ENCODE measurements at regions of chr1 and their contacts with region 1.

Region 1: DNA sequence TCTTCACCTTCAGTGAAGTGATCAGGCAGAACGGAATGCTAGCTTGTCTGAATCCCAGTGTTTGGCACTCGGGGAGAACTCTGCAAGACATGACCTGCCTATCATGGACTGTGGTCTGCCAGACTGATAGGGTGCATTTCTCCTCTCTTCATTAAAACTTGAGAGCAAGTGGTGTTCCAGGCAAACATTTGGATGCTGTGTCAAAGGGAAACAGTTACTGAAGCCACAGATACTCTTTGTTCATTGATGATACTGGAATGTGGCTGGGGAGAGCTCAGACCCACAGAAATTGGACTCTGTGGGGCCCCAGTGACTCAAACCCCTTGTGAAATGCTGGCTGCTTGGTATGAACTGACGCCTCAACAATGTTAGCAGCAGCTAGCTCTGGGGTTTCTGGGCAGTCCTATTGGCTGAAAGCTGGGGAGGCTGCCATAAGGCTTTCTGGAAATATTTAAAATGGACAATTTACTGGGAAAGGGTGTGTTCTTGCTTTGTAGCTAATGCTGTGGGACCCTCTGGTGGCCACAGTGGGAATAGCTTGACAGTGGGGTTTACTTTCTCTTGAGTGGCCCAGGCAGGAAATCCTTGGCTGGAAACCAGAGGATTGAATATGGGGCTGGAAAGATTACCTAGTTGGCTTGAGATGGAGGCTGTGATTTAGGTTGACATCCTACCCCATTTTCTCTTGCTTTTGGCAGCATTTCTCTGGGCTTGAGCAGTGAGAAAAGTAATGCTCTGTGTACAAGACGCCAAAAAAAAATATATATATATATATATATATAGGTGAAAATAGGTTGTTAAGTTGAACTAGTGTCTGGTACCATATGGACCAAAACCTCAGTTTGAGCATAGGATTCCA is 8.0 kb upstream of the S100A10 start:
- DNase-seq: peak; percentile 62 to 86 (median 75)
- ATAC-seq: peak; percentile 87
- H3K4me3 ChIP-seq: no peak overlapping the region
- H3K4me3 Mint-ChIP-seq: no peak overlapping the region
- H3K27ac ChIP-seq: no peak overlapping the region
- H3K27ac Mint-ChIP-seq: no peak overlapping the region
- H3K4me1 ChIP-seq: peaks cover 9% of the 10 kb centered on the region
- H3K4me1 Mint-ChIP-seq: no peaks in the 10 kb centered on the region
- H3K27me3 ChIP-seq: no peaks in the 10 kb centered on the region
- H3K27me3 Mint-ChIP-seq: peaks cover 11% of the 10 kb centered on the region
- CTCF ChIP-seq: peak; percentile 95

Region 2: DNA sequence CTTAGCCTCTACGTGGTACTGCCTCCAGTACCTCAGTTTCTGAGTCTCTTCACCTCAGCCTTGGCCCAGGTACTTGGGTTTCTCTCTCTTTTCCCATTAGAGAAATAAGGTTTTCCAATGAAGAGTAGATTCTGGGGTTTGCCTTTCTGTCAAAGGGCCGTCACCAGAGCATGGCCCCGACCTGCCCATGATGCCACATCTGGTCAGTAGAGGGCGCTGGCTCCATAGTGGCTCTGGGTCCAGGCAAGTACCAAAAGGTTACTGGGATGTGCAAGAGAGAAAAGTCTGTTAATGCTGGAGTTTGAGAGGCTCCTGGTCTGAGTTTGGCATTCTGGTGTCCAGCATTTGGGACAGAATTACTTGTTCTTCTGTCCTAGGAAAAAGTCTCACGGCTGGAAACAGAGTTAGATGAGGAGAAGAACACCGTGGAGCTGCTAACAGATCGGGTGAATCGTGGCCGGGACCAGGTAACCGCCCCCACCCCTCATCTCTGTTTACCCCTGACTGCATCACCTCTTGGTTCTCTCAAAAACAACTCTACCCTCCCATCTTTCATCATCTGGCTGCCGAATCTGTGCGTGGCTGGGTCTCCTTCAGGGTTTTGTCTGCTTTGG is 466.8 kb before region 1 on chr1:
- CTCF ChIA-PET with region 1: no interaction called
- POLR2A ChIA-PET with region 1: no interaction called
- intact Hi-C with region 1: loop called in 1 of 2 experiments (anchors 5 kb)
- DNase-seq: peak; percentile 60 to 84 (median 72)
- ATAC-seq: peak; percentile 84
- H3K4me3 ChIP-seq: no peak overlapping the region
- H3K4me3 Mint-ChIP-seq: no peak overlapping the region
- H3K27ac ChIP-seq: no peak overlapping the region
- H3K27ac Mint-ChIP-seq: no peak overlapping the region
- H3K4me1 ChIP-seq: peaks cover 10% of the 10 kb centered on the region
- H3K4me1 Mint-ChIP-seq: peaks cover 5% of the 10 kb centered on the region
- H3K27me3 ChIP-seq: no peaks in the 10 kb centered on the region
- H3K27me3 Mint-ChIP-seq: no peaks in the 10 kb centered on the region
- CTCF ChIP-seq: peak; percentile 82

Region 3: GRCh38 chr1:151693076-151693651 is 308.5 kb before region 1 on chr1:
- CTCF ChIA-PET with region 1: no interaction called
- POLR2A ChIA-PET with region 1: no interaction called
- intact Hi-C with region 1: no loop called
- DNase-seq: no peak
- ATAC-seq: no peak
- H3K4me3 ChIP-seq: no peak overlapping the region
- H3K4me3 Mint-ChIP-seq: no peak overlapping the region
- H3K27ac ChIP-seq: no peak overlapping the region
- H3K27ac Mint-ChIP-seq: no peak overlapping the region
- H3K4me1 ChIP-seq: peaks cover 2% of the 10 kb centered on the region
- H3K4me1 Mint-ChIP-seq: no peaks in the 10 kb centered on the region
- H3K27me3 ChIP-seq: no peaks in the 10 kb centered on the region
- H3K27me3 Mint-ChIP-seq: no peaks in the 10 kb centered on the region
- CTCF ChIP-seq: no peak

Region 4: GRCh38 chr1:151888972-151889570 is 112.5 kb before region 1 on chr1:
- CTCF ChIA-PET with region 1: interaction called, 7 read pairs
- POLR2A ChIA-PET with region 1: interaction called, 5 read pairs
- intact Hi-C with region 1: loop called (anchors 1 kb)
- DNase-seq: peak in 3 of 14 experiments; percentile 52 to 63 (median 62)
- ATAC-seq: peak; percentile 69
- H3K4me3 ChIP-seq: no peak overlapping the region
- H3K4me3 Mint-ChIP-seq: no peak overlapping the region
- H3K27ac ChIP-seq: no peak overlapping the region
- H3K27ac Mint-ChIP-seq: peak overlapping the region; percentile 76
- H3K4me1 ChIP-seq: peaks cover 16% of the 10 kb centered on the region
- H3K4me1 Mint-ChIP-seq: peaks cover 40% of the 10 kb centered on the region
- H3K27me3 ChIP-seq: no peaks in the 10 kb centered on the region
- H3K27me3 Mint-ChIP-seq: no peaks in the 10 kb centered on the region
- CTCF ChIP-seq: peak; percentile 68

Region 5: GRCh38 chr1:151968058-151968457 is 33.6 kb before region 1 on chr1:
- CTCF ChIA-PET with region 1: interaction called, 93 read pairs
- POLR2A ChIA-PET with region 1: interaction called, 18 read pairs
- intact Hi-C with region 1: loop called (anchors 1 kb)
- DNase-seq: peak; percentile 20 to 83 (median 38)
- ATAC-seq: peak; percentile 99
- H3K4me3 ChIP-seq: no peak overlapping the region
- H3K4me3 Mint-ChIP-seq: no peak overlapping the region
- H3K27ac ChIP-seq: no peak overlapping the region
- H3K27ac Mint-ChIP-seq: no peak overlapping the region
- H3K4me1 ChIP-seq: peaks cover 9% of the 10 kb centered on the region
- H3K4me1 Mint-ChIP-seq: peaks cover 7% of the 10 kb centered on the region
- H3K27me3 ChIP-seq: no peaks in the 10 kb centered on the region
- H3K27me3 Mint-ChIP-seq: no peaks in the 10 kb centered on the region
- CTCF ChIP-seq: peak; percentile 72

Region 6: DNA sequence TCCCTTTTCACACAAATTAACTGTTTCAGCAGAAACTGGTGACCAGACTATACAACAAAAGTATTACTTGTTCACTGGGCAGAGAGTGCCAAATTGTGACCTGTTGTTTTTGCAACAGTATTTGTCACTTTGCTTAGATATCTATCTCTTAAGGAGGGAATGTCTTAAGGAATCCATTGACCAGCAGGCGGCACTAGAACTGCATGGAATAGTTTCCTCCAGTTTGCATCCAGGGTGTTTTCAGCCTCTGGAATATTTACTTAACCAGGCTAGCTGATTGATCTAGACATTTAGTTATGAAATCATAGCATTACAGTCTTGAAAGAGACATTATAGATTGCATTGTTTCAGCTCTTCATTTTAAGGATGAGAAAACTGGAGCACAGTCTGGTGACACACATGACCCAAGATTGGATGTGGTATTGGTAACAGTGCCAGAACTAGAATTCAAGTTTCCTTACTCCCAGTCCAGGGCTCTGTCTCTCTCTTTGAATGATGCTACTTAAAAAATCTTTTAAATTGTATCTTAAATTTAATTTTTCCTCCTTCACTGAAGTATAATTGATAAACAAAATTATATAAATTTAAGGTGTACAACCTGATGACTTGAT is 140.5 kb after region 1 on chr1:
- CTCF ChIA-PET with region 1: no interaction called
- POLR2A ChIA-PET with region 1: no interaction called
- intact Hi-C with region 1: no loop called
- DNase-seq: peak in 4 of 14 experiments; percentile 10 to 49 (median 28)
- ATAC-seq: no peak
- H3K4me3 ChIP-seq: no peak overlapping the region
- H3K4me3 Mint-ChIP-seq: no peak overlapping the region
- H3K27ac ChIP-seq: no peak overlapping the region
- H3K27ac Mint-ChIP-seq: no peak overlapping the region
- H3K4me1 ChIP-seq: no peaks in the 10 kb centered on the region
- H3K4me1 Mint-ChIP-seq: no peaks in the 10 kb centered on the region
- H3K27me3 ChIP-seq: peaks cover 8 to 29% of the 10 kb centered on the region in 2 experiments
- H3K27me3 Mint-ChIP-seq: peaks cover 54% of the 10 kb centered on the region
- CTCF ChIP-seq: no peak

Region 7: GRCh38 chr1:152237093-152237492 is 235.5 kb after region 1 on chr1:
- CTCF ChIA-PET with region 1: no interaction called
- POLR2A ChIA-PET with region 1: no interaction called
- intact Hi-C with region 1: no loop called
- DNase-seq: no peak
- ATAC-seq: no peak
- H3K4me3 ChIP-seq: no peak overlapping the region
- H3K4me3 Mint-ChIP-seq: no peak overlapping the region
- H3K27ac ChIP-seq: no peak overlapping the region
- H3K27ac Mint-ChIP-seq: no peak overlapping the region
- H3K4me1 ChIP-seq: no peaks in the 10 kb centered on the region
- H3K4me1 Mint-ChIP-seq: no peaks in the 10 kb centered on the region
- H3K27me3 ChIP-seq: peaks cover 0 to 7% of the 10 kb centered on the region in 2 experiments
- H3K27me3 Mint-ChIP-seq: peaks cover 49% of the 10 kb centered on the region
- CTCF ChIP-seq: no peak

Measured in CD4-positive, alpha-beta T cell (primary cell).